ENCODE measurements at regions of chr11 and their contacts with region 1.

Region 1: DNA sequence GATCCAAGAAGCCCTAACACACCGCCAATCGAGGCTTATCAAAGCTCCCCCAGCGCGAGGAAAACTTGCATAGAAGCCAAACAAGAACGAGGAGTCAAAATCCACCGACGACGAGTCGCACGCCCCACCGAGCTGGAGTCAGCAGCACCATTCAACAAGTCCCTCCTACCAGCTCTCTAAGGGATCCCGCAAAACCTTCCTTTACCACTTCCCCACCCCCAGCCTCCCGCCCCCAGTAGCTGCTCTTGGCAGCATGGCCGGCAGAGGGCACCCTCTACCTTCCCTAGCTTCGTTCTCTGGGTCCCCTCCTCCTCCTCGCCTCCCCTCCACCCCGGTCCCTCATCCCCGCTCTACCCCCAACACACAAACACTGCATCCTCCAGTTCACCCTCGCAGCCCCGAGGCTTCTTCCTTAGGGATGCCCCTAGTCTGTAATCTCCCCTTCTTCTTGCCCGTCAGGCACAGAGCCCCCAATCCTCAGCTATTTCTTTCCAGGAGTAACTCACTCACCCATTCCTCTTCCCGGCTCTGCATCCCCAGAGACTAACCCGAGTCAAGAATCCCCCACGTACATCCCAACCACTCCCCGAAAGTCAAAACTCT is 1.3 kb downstream of the BDNF start:
- DNase-seq: peak; percentile 83 to 97
- H3K4me3 ChIP-seq: peak overlapping the region; percentile 61 to 95 (median 83)
- H3K27ac ChIP-seq: no peak overlapping the region; the same call in 1 of the 2 replicates
- H3K4me1 ChIP-seq: peaks cover 1 to 18% (median 3%) of the 10 kb centered on the region in 4 experiments; a peak in 4 of 7 replicates
- H3K27me3 ChIP-seq: peaks cover 8 to 28% (median 20%) of the 10 kb centered on the region in 4 experiments
- CTCF ChIP-seq: peak; percentile 72 to 89 (median 73)
- EP300 ChIP-seq: no peak
- POLR2A ChIP-seq: no peak
- RAD21 ChIP-seq: peak; percentile 87 to 90

Region 2: GRCh38 chr11:27688076-27688475 is 10.9 kb before region 1 on chr11:
- CTCF ChIA-PET with region 1: interaction called, 9 read pairs
- POLR2A ChIA-PET with region 1: interaction called, 17 read pairs
- DNase-seq: peak in 1 of 2 experiments; percentile 71
- H3K4me3 ChIP-seq: peak overlapping the region in 1 of 4 experiments; percentile 3; a peak in 1 of 8 replicates
- H3K27ac ChIP-seq: no peak overlapping the region
- H3K4me1 ChIP-seq: peaks cover 4 to 11% (median 6%) of the 10 kb centered on the region in 4 experiments; a peak in 6 of 7 replicates
- H3K27me3 ChIP-seq: no peaks in the 10 kb centered on the region
- CTCF ChIP-seq: no peak
- EP300 ChIP-seq: peak in 1 of 2 experiments; percentile 35; a peak in 1 of 3 replicates
- POLR2A ChIP-seq: no peak
- RAD21 ChIP-seq: peak in 1 of 2 experiments; percentile 7; a peak in 1 of 4 replicates

Region 3: GRCh38 chr11:27710536-27710935 is 11.6 kb after region 1 on chr11:
- CTCF ChIA-PET with region 1: interaction called, 223 read pairs
- POLR2A ChIA-PET with region 1: interaction called, 191 read pairs
- DNase-seq: no peak
- H3K4me3 ChIP-seq: no peak overlapping the region
- H3K27ac ChIP-seq: no peak overlapping the region
- H3K4me1 ChIP-seq: no peaks in the 10 kb centered on the region
- H3K27me3 ChIP-seq: no peaks in the 10 kb centered on the region
- CTCF ChIP-seq: no peak
- EP300 ChIP-seq: no peak
- POLR2A ChIP-seq: no peak
- RAD21 ChIP-seq: no peak

Region 4: DNA sequence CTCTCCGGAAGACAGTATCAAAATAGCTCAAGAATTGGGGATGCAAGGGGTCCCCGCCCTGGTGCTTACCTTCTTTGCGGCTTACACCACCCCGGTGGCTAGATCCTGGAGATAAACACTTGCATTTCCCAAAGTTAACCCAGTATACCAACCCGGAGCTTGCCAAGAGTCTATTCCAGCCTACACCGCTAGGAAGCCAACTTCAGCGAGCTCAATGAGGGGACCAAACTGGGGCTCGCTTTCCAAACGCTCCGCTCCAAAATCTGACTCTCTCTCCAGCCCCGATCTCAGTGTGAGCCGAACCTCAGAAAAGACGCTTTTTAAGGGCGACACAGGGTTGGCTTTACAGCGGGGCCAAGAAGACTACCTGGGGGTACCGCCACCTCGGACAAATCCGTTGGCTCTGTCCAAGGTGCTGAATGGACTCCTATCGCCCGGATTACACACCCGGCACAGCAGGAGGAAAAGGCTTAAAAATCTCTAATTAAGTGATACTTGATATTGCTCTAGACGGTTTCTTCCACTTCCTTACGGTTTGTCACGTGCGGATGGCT is 21.4 kb after region 1 on chr11:
- CTCF ChIA-PET with region 1: interaction called, 223 read pairs
- POLR2A ChIA-PET with region 1: interaction called, 191 read pairs
- DNase-seq: peak in 1 of 2 experiments; percentile 86
- H3K4me3 ChIP-seq: peak overlapping the region; percentile 63 to 99 (median 78)
- H3K27ac ChIP-seq: no peak overlapping the region
- H3K4me1 ChIP-seq: peaks cover 5 to 15% (median 10%) of the 10 kb centered on the region in 4 experiments
- H3K27me3 ChIP-seq: peaks cover 7 to 29% (median 25%) of the 10 kb centered on the region in 4 experiments
- CTCF ChIP-seq: peak; percentile 28 to 34 (median 29); a peak in 3 of 4 replicates
- EP300 ChIP-seq: no peak
- POLR2A ChIP-seq: no peak
- RAD21 ChIP-seq: peak; percentile 8 to 25; a peak in 3 of 4 replicates

Region 5: GRCh38 chr11:28026634-28027290 is 327.8 kb after region 1 on chr11:
- CTCF ChIA-PET with region 1: no interaction called
- POLR2A ChIA-PET with region 1: no interaction called
- DNase-seq: no peak
- H3K4me3 ChIP-seq: no peak overlapping the region
- H3K27ac ChIP-seq: no peak overlapping the region
- H3K4me1 ChIP-seq: no peaks in the 10 kb centered on the region
- H3K27me3 ChIP-seq: no peaks in the 10 kb centered on the region
- CTCF ChIP-seq: no peak
- EP300 ChIP-seq: no peak
- POLR2A ChIP-seq: no peak
- RAD21 ChIP-seq: no peak

Region 6: DNA sequence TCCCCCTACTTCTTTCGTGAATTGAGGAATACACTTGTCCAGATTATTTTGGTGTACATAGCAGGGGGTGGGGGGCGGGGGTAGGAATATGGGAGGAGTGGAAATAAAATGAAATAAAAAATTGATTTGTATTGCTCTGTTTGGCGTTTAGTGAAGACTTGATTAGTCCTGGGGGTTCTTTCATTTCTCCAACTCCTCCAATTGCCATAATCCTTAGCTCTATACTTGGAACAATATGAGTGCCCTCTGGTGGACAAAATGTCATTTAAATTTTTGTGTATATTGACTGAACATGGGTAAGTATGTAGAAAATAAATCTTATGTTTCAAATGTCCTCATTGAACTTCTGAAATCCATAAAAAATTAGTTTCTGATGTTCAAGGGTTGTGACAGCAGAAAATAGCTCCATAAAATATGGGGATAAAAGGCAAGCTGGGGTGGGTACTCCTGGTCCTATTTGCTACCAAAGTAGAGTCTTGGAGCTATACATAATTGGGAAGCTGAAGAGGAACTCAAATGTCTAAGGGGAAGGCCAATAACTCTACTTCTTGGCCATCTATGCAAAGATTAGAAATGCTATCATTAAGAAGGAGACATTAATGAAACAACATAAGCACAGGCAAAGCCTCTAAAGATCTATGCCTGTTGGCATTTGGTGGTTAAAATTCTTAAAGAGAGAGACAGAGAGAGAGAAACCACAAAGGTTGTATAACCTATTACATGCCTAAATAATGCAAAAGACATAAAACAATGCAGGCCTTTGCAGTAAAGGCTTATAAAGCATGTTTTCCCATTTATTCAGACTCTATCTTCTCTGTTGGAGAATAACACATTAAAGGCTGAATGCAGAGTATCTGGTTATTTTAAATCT is 830.8 kb after region 1 on chr11:
- CTCF ChIA-PET with region 1: interaction called, 16 read pairs
- POLR2A ChIA-PET with region 1: interaction called, 3 read pairs
- DNase-seq: no peak
- H3K4me3 ChIP-seq: no peak overlapping the region
- H3K27ac ChIP-seq: no peak overlapping the region
- H3K4me1 ChIP-seq: no peaks in the 10 kb centered on the region
- H3K27me3 ChIP-seq: no peaks in the 10 kb centered on the region
- CTCF ChIP-seq: peak in 1 of 3 experiments; percentile 35; a peak in 2 of 4 replicates
- EP300 ChIP-seq: no peak
- POLR2A ChIP-seq: no peak
- RAD21 ChIP-seq: peak; percentile 52 to 62

Measured in H1 (cell line).